Motor neuron (in vitro differentiated cells): ENCODE measurements at regions of chr18 and their contacts with region 1.

Region 1: GRCh38 chr18:10851824-10852319 is 297.5 kb downstream of the PIEZO2 start:
- ATAC-seq: peak in 4 of 8 experiments; percentile 17 to 63 (median 56)
- H3K4me3 ChIP-seq: no peak overlapping the region
- H3K27ac ChIP-seq: no peak overlapping the region
- H3K4me1 ChIP-seq: no peaks in the 10 kb centered on the region

Region 2: GRCh38 chr18:9147440-9148202 is 1704.3 kb before region 1 on chr18:
- in situ Hi-C with region 1: no loop called
- ATAC-seq: peak in 6 of 8 experiments; percentile 32 to 89 (median 74)
- H3K4me3 ChIP-seq: no peak overlapping the region
- H3K27ac ChIP-seq: no peak overlapping the region
- H3K4me1 ChIP-seq: peaks cover 0 to 14% of the 10 kb centered on the region in 2 donors

Region 3: GRCh38 chr18:11040823-11041656 is 189.2 kb after region 1 on chr18:
- in situ Hi-C with region 1: loop called in 5 of 9 experiments (anchors 25 kb)
- ATAC-seq: peak in 7 of 8 experiments; percentile 50 to 93 (median 74)
- H3K4me3 ChIP-seq: no peak overlapping the region
- H3K27ac ChIP-seq: no peak overlapping the region
- H3K4me1 ChIP-seq: peaks cover 6 to 12% of the 10 kb centered on the region in 2 donors

Region 4: DNA sequence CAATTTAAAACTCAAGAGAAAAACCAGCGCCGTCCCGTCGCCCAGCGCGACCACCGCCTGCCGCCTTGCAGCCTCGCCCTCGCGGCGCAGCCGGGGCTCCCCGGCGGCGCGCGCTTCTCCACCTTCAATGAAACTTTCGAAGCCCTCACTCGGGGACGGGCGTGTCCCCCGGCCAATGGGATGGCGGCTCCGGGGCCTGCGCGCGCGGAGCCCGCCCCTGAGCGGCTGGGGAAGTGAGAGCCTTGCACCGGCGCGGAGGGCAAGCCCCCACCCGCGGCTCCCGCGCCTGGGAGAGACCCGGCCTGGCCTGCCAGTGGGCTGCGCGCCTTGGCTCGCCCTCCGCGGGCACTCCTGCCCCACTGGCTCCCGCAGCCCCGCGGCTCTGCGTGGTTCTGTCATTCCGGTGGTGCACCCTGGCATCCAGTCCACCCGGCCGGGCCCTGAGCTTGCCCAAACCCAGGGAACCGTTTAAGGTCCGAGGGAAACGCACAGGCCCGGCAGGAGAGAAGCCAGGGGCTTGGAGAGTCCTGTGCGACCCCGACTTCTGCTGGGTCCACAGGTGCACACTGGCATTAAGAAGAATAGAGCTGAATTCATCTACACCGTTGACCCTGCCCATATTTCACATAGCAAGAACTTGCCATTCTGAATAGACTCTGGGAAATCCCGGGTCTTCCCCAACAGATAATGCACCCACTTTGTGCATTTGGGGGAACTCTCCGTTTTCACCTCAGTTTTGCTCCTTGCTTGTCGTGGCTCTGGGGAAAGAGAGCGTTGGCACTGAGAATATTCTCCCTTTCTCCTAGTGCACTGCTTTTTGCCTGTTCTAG is 297.8 kb after region 1 on chr18 and contains the start of gene PIEZO2:
- in situ Hi-C with region 1: loop called in 5 of 9 experiments (anchors 25 kb)
- ATAC-seq: peak; percentile 93 to 97 (median 96)
- H3K4me3 ChIP-seq: peak within 1 kb of the TSS; percentile 35 to 42 (median 39)
- H3K27ac ChIP-seq: no peak within 1 kb of the TSS
- H3K4me1 ChIP-seq: peaks cover 0 to 12% of the 10 kb centered on the region in 2 donors
- total RNA-seq, gene PIEZO2: 1.9 to 73.5 (median 2.8) TPM